MCF 10A (cell line): ENCODE measurements at regions of chr15 and their contacts with region 1.

Region 1: GRCh38 chr15:90233376-90234095 is at the start of gene CIB1:
- DNase-seq: peak; percentile 97
- H3K4me3 Mint-ChIP-seq: peak within 1 kb of the TSS; percentile 85
- H3K27ac Mint-ChIP-seq: peak within 1 kb of the TSS; percentile 12
- H3K4me1 Mint-ChIP-seq: peaks cover 19% of the 10 kb centered on the region
- H3K27me3 Mint-ChIP-seq: no peaks in the 10 kb centered on the region
- CTCF ChIP-seq: no peak
- total RNA-seq, gene CIB1: 45.6 and 50.5 TPM in 2 replicates

Region 2: GRCh38 chr15:90086868-90087268 is 146.7 kb before region 1 on chr15:
- CTCF ChIA-PET with region 1: no interaction called
- POLR2A ChIA-PET with region 1: interaction called, 6 read pairs
- intact Hi-C with region 1: loop called (anchors 5 kb)
- DNase-seq: peak; percentile 76
- H3K4me3 Mint-ChIP-seq: no peak overlapping the region
- H3K27ac Mint-ChIP-seq: no peak overlapping the region
- H3K4me1 Mint-ChIP-seq: no peaks in the 10 kb centered on the region
- H3K27me3 Mint-ChIP-seq: no peaks in the 10 kb centered on the region
- CTCF ChIP-seq: peak; percentile 83

Region 3: GRCh38 chr15:90165659-90166421 is 67.7 kb before region 1 on chr15:
- CTCF ChIA-PET with region 1: interaction called, 3 read pairs
- POLR2A ChIA-PET with region 1: interaction called, 24 read pairs
- intact Hi-C with region 1: no loop called
- DNase-seq: peak; percentile 99
- H3K4me3 Mint-ChIP-seq: peak overlapping the region; percentile 25
- H3K27ac Mint-ChIP-seq: peak overlapping the region; percentile 66
- H3K4me1 Mint-ChIP-seq: peaks cover 30% of the 10 kb centered on the region
- H3K27me3 Mint-ChIP-seq: no peaks in the 10 kb centered on the region
- CTCF ChIP-seq: no peak

Region 4: DNA sequence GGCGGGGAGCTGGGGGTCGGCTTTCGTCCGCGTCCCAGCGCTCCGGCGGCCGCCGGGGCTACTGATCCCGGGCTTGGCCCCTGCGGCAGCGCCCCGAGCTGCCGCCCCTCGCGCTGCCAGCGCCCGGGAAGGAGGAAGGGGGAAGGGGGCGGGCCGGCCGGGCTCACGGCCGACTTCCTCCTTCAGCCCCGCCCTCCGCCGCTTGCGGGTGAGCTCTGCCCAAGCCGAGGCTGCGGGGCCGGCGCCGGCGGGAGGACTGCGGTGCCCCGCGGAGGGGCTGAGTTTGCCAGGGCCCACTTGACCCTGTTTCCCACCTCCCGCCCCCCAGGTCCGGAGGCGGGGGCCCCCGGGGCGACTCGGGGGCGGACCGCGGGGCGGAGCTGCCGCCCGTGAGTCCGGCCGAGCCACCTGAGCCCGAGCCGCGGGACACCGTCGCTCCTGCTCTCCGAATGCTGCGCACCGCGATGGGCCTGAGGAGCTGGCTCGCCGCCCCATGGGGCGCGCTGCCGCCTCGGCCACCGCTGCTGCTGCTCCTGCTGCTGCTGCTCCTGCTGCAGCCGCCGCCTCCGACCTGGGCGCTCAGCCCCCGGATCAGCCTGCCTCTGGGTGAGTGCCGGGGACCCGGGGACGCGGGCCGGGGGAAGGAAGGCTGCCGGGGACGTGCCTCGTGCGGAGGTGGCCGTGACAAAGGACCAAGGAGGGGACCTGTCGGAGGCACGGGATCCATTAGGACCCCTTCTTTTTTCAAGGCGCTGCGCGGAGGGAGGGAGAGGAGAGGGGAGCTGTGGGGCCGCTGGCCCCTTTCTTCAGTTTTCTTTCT is 32.2 kb before region 1 on chr15 and contains the start of gene SEMA4B:
- CTCF ChIA-PET with region 1: interaction called, 9 read pairs
- POLR2A ChIA-PET with region 1: interaction called, 20 read pairs
- intact Hi-C with region 1: no loop called
- DNase-seq: peak; percentile 51
- H3K4me3 Mint-ChIP-seq: peak within 1 kb of the TSS; percentile 78
- H3K27ac Mint-ChIP-seq: no peak within 1 kb of the TSS
- H3K4me1 Mint-ChIP-seq: peaks cover 27% of the 10 kb centered on the region
- H3K27me3 Mint-ChIP-seq: no peaks in the 10 kb centered on the region
- CTCF ChIP-seq: no peak
- total RNA-seq, gene SEMA4B: 38.6 and 46.4 TPM in 2 replicates

Region 5: GRCh38 chr15:90249203-90249863 is 15.8 kb after region 1 on chr15 and contains the start of gene TTLL13:
- CTCF ChIA-PET with region 1: interaction called, 6 read pairs
- POLR2A ChIA-PET with region 1: interaction called, 21 read pairs
- intact Hi-C with region 1: no loop called
- DNase-seq: peak; percentile 89
- H3K4me3 Mint-ChIP-seq: peak within 1 kb of the TSS; percentile 74
- H3K27ac Mint-ChIP-seq: no peak within 1 kb of the TSS
- H3K4me1 Mint-ChIP-seq: no peaks in the 10 kb centered on the region
- H3K27me3 Mint-ChIP-seq: no peaks in the 10 kb centered on the region
- CTCF ChIP-seq: no peak
- total RNA-seq, gene TTLL13: 0.47 TPM in 1 of 2 replicates, not detected in the other